ENCODE measurements at regions of chr12 and their contacts with region 1.

Region 1: GRCh38 chr12:51846911-51847642 is 1.4 kb downstream of the FIGNL2 start:
- DNase-seq: peak; percentile 73
- ATAC-seq: peak; percentile 57
- H3K4me3 Mint-ChIP-seq: peak overlapping the region; percentile 67
- H3K27ac Mint-ChIP-seq: no peak overlapping the region
- H3K4me1 Mint-ChIP-seq: peaks cover 10% of the 10 kb centered on the region
- H3K27me3 Mint-ChIP-seq: peaks cover 33% of the 10 kb centered on the region

Region 2: DNA sequence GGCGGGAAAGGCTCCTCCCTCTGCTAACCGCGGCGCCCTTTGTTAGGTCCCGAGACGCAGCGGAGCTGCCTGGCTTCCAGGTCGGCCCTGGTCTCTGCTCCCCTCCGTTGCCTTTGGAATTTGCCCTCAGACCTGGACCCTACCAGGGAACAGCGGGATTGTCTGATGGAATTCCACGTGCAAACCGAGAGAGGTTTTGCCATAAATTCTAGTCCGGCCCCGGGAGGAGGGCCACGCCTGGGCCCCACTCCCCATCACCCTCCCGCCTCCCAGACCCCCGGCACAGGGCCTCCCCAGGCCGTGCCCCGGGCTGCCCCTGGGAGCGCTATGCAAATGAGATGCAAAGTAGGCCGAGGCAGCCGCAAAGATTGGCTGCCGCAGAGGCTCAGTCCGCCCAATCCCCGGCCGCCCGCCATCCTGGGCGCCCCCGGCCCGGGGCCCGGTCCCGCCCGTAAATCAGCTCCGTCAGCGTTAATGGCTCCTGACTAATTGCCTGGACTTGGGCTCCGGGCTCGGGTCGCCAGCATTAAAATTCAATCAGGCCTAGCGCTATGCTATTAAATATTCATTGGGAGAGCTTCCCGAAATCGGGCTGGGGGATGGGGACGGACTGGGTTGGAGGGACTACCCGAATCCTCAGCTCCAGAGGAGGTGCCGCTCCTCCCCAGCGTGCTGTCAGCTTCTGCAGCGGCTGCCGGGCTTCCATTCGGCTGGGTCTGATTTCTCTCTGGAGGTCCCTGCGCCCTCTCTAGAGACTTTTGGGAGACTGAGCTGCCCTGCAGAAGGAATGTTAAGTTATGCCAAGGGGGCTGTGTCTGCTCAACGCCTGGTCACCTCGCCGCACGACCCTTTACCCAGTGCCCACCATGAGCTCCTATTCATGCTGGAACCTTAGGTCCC is 17.1 kb after region 1 on chr12:
- CTCF ChIA-PET with region 1: interaction called, 5 read pairs
- POLR2A ChIA-PET with region 1: no interaction called
- intact Hi-C with region 1: loop called in 1 of 2 experiments (anchors 1 kb)
- DNase-seq: peak; percentile 71
- ATAC-seq: peak; percentile 84
- H3K4me3 Mint-ChIP-seq: no peak overlapping the region
- H3K27ac Mint-ChIP-seq: no peak overlapping the region
- H3K4me1 Mint-ChIP-seq: peaks cover 16% of the 10 kb centered on the region
- H3K27me3 Mint-ChIP-seq: peaks cover 45% of the 10 kb centered on the region

Measured in activated CD4-positive, alpha-beta T cell treated with anti-CD3 and anti-CD28 coated beads for 36 hours (primary cell).